Mammary epithelial cell (primary cell): ENCODE measurements at regions of chr10 and their contacts with region 1.

Region 1: GRCh38 chr10:124296121-124296812 is 122.5 kb downstream of the OAT start:
- DNase-seq: peak; percentile 13
- H3K4me3 ChIP-seq: no peak overlapping the region
- H3K27ac ChIP-seq: no peak overlapping the region
- H3K4me1 ChIP-seq: peaks cover 21% of the 10 kb centered on the region
- H3K27me3 ChIP-seq: no peaks in the 10 kb centered on the region
- CTCF ChIP-seq: peak in 1 of 2 donors; percentile 30

Region 2: DNA sequence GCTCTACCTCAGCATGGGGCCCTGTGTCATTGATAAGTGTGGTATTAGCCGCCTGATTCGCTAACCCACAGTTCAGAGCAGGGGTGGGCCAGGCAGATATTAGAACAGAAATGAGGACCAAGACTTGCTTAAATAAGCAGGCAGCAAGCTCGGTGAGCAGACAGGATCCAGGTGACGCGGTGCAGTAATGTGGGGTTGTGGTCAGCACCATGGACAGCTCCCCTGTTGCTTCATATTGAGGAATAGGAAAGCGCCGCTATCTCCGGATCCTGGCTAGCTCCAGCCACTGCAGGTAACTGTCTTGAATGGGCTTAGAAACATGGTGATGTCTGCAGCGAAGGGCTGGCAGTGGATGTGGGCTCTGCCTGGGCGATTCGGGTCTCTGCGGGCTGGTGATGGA is 681.4 kb before region 1 on chr10:
- CTCF ChIA-PET with region 1: no interaction called
- dilution Hi-C with region 1: no loop called
- in situ Hi-C with region 1: no loop called
- intact Hi-C with region 1: no loop called
- DNase-seq: peak; percentile 52
- H3K4me3 ChIP-seq: no peak overlapping the region
- H3K27ac ChIP-seq: no peak overlapping the region
- H3K4me1 ChIP-seq: no peaks in the 10 kb centered on the region
- H3K27me3 ChIP-seq: no peaks in the 10 kb centered on the region
- CTCF ChIP-seq: no peak

Region 3: GRCh38 chr10:124105594-124105993 is 190.7 kb before region 1 on chr10:
- CTCF ChIA-PET with region 1: no interaction called
- dilution Hi-C with region 1: no loop called
- in situ Hi-C with region 1: no loop called
- intact Hi-C with region 1: no loop called
- DNase-seq: peak; percentile 26
- H3K4me3 ChIP-seq: peak overlapping the region in 1 of 3 experiments; percentile 22
- H3K27ac ChIP-seq: peak overlapping the region; percentile 65
- H3K4me1 ChIP-seq: peaks cover 25% of the 10 kb centered on the region
- H3K27me3 ChIP-seq: no peaks in the 10 kb centered on the region
- CTCF ChIP-seq: no peak

Region 4: GRCh38 chr10:124279882-124280281 is 16.4 kb before region 1 on chr10:
- CTCF ChIA-PET with region 1: no interaction called
- dilution Hi-C with region 1: no loop called
- in situ Hi-C with region 1: no loop called
- intact Hi-C with region 1: loop called (anchors 2 kb)
- DNase-seq: no peak
- H3K4me3 ChIP-seq: no peak overlapping the region
- H3K27ac ChIP-seq: no peak overlapping the region
- H3K4me1 ChIP-seq: no peaks in the 10 kb centered on the region
- H3K27me3 ChIP-seq: no peaks in the 10 kb centered on the region
- CTCF ChIP-seq: no peak

Region 5: DNA sequence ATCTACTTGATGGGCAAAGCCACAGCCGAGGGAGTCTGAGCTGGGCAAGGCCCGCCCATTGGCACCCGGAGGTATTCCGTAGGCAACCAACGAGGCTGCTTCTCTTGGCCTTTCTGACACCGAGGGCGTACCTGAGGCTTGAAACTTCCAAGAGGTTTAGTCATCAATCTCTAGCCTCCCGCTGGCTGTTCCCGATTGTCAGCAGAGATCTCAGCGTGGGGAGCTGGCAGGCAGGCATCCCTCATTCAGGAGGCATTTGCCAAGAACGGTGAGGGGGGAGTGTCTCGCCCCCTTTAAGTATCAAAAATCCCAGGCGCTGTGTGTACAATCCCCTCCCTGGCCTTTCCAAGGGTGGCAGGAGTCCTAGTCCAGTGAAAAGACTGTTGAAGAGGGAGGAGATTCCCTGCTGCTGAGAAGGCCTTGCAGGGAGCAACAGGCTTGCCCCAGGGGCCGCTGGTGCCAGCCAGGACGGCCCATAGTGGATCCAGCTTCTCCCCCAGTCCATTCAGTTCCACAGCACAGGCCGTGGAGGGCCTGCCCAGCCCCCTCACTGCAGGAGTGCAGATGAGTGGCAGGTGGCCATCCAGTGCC is 82.7 kb after region 1 on chr10:
- CTCF ChIA-PET with region 1: interaction called, 12 read pairs
- dilution Hi-C with region 1: no loop called
- in situ Hi-C with region 1: no loop called
- intact Hi-C with region 1: no loop called
- DNase-seq: peak; percentile 90
- H3K4me3 ChIP-seq: no peak overlapping the region
- H3K27ac ChIP-seq: no peak overlapping the region
- H3K4me1 ChIP-seq: peaks cover 12% of the 10 kb centered on the region
- H3K27me3 ChIP-seq: no peaks in the 10 kb centered on the region
- CTCF ChIP-seq: no peak

Region 6: GRCh38 chr10:124388823-124389612 is 92.8 kb after region 1 on chr10:
- CTCF ChIA-PET with region 1: interaction called, 14 read pairs
- dilution Hi-C with region 1: no loop called
- in situ Hi-C with region 1: no loop called
- intact Hi-C with region 1: loop called (anchors 1 kb)
- DNase-seq: peak; percentile 72
- H3K4me3 ChIP-seq: peak overlapping the region; percentile 14 to 33 (median 17)
- H3K27ac ChIP-seq: no peak overlapping the region
- H3K4me1 ChIP-seq: peaks cover 13% of the 10 kb centered on the region
- H3K27me3 ChIP-seq: no peaks in the 10 kb centered on the region
- CTCF ChIP-seq: peak; percentile 62 to 91